ENCODE measurements at regions of chr3 and their contacts with region 1.

Region 1: DNA sequence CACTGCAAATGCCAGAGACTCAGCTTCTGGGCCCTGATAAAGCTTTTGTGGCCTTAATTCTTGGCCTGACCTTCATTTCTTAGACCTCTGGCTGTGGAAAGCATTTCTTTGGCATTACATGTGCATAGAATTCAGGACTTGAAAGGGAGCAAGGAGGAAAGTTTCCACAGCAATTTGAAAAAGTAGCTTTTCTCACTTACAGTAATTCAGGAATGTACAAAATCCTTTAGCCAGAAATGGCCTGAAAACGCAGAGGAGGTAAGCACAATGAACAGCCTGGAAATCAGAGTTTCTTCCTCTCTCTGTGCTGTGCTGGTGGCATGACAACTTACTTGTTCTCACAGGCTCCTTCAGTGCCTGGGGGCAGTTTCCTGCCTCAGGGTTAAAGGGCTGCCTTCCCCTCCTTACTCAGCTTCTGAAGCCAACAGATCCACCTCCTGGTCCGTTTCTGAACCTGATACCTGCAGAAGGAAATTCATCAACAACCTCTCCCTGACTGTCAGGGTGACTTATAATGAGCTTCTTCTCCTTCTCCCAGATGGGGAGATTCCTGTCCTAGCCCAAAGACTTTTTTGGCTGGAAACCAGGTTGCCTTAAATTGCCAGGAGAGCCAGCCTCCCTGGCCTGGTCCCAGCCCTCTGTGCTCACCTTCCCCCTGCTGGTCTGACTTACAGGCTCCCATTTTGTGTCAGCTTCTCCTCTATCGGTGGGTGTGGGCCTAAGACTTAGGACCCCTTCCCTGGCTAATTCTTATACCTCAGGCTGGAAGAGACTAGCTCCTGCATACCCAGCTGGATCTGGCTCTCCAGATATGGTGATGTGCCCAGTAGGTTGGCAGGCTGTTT is 102.3 kb downstream of the MYRIP start:
- DNase-seq: peak; percentile 54
- H3K4me3 Mint-ChIP-seq: peak overlapping the region; percentile 16
- H3K27ac Mint-ChIP-seq: peak overlapping the region; percentile 71
- H3K4me1 Mint-ChIP-seq: peaks cover 48% of the 10 kb centered on the region
- H3K27me3 Mint-ChIP-seq: no peaks in the 10 kb centered on the region
- CTCF ChIP-seq: no peak

Region 2: DNA sequence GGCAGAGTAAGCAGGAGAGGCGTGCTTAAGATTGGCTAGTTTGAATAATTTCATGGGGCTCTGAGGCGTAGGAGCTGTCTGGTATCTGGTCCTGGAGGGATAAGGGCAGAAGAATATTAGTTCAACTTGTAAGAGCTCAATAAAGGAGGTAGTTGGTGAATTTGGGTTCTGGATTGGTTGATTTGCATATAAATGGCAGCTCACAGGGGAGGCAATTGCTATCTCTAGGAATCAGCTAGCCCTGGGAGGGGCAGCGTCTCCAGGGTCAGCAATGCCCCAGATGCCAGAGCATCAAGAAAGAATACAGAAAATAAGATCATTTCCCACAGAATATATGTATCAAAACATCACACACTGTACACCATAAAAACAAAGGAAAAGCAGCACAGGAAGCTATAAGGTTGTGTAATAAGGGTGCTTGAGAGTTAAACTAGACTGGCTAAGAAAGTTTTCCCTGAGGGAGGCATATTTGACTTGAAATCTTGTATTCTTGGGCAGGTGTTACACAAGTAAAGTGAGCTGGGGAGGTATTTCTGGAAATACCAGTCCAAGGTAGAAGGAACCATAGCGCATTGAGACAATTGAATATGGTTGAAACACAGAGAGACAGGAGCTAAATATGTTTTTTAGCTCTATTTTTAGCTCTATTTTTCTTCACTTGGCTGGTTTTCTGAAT is 438.1 kb before region 1 on chr3:
- CTCF ChIA-PET with region 1: no interaction called
- intact Hi-C with region 1: no loop called
- DNase-seq: no peak
- H3K4me3 Mint-ChIP-seq: no peak overlapping the region
- H3K27ac Mint-ChIP-seq: no peak overlapping the region
- H3K4me1 Mint-ChIP-seq: no peaks in the 10 kb centered on the region
- H3K27me3 Mint-ChIP-seq: peaks cover 17% of the 10 kb centered on the region
- CTCF ChIP-seq: no peak

Region 3: GRCh38 chr3:39748002-39748401 is 163.7 kb before region 1 on chr3:
- CTCF ChIA-PET with region 1: no interaction called
- intact Hi-C with region 1: loop called (anchors 5 kb)
- DNase-seq: peak; percentile 14
- H3K4me3 Mint-ChIP-seq: no peak overlapping the region
- H3K27ac Mint-ChIP-seq: no peak overlapping the region
- H3K4me1 Mint-ChIP-seq: peaks cover 63% of the 10 kb centered on the region
- H3K27me3 Mint-ChIP-seq: no peaks in the 10 kb centered on the region
- CTCF ChIP-seq: no peak

Region 4: DNA sequence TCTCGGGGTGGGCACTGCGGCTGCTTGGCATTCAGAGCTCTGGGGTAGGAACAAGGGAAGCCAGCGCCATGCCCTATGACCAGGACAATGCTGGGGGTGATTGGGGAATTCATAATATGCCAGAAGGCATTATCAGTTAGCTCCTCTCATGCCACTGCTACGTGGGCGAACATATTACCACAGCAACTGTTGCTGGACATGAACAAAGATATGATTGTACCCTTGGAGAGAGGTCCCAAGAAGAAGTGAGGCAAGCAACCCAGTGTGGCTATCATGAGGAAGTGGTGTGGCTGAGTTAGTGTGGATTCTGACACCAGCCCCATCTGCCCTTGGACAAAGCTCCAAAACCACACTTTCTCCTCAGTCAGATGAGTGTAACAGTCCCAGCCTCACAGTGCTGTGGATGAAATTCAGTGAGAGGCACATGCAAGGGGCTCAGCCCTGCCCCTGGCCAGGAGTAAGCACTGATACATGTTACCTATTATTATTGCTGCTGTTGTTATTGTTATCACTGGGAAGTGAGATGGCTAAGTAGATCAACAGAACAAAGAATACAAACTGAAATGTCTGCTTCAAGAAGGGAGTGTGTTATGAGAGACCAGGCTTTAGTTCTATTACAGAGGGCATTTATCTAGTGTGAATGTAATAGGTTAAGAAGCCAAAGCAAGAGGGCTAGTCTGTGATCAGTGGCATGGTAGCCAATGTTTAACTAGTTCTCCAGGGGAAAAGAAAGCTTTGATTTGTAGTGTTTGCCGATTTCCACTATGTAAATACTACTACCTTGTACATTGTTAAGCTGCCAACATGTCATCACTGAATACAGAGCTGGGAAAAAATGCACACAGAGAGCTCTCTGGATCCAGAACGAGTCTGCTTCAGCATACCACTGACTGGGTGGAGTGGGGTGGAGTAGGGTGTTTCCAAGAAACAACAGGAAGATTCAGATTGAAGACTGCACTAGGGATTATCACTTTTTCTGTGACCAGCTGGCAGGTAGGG is 175.5 kb after region 1 on chr3:
- CTCF ChIA-PET with region 1: no interaction called
- intact Hi-C with region 1: loop called (anchors 10 kb)
- DNase-seq: peak; percentile 64
- H3K4me3 Mint-ChIP-seq: peak overlapping the region; percentile 52
- H3K27ac Mint-ChIP-seq: peak overlapping the region; percentile 94
- H3K4me1 Mint-ChIP-seq: peaks cover 34% of the 10 kb centered on the region
- H3K27me3 Mint-ChIP-seq: no peaks in the 10 kb centered on the region
- CTCF ChIP-seq: no peak

Region 5: GRCh38 chr3:40116478-40117162 is 204.9 kb after region 1 on chr3:
- CTCF ChIA-PET with region 1: no interaction called
- intact Hi-C with region 1: loop called (anchors 5 kb)
- DNase-seq: peak; percentile 74
- H3K4me3 Mint-ChIP-seq: peak overlapping the region; percentile 28
- H3K27ac Mint-ChIP-seq: peak overlapping the region; percentile 86
- H3K4me1 Mint-ChIP-seq: peaks cover 64% of the 10 kb centered on the region
- H3K27me3 Mint-ChIP-seq: no peaks in the 10 kb centered on the region
- CTCF ChIP-seq: no peak

Region 6: GRCh38 chr3:40267937-40268723 is 356.4 kb after region 1 on chr3:
- CTCF ChIA-PET with region 1: no interaction called
- intact Hi-C with region 1: no loop called
- DNase-seq: no peak
- H3K4me3 Mint-ChIP-seq: no peak overlapping the region
- H3K27ac Mint-ChIP-seq: no peak overlapping the region
- H3K4me1 Mint-ChIP-seq: no peaks in the 10 kb centered on the region
- H3K27me3 Mint-ChIP-seq: no peaks in the 10 kb centered on the region
- CTCF ChIP-seq: no peak